ENCODE measurements at regions of chr17 and their contacts with region 1.

Region 1: GRCh38 chr17:37225458-37225857 is 150.3 kb upstream of the C17orf78 start:
- DNase-seq: no peak
- H3K4me3 Mint-ChIP-seq: no peak overlapping the region
- H3K27ac Mint-ChIP-seq: peak overlapping the region; percentile 3
- H3K4me1 Mint-ChIP-seq: no peaks in the 10 kb centered on the region
- H3K27me3 Mint-ChIP-seq: no peaks in the 10 kb centered on the region
- CTCF ChIP-seq: no peak

Region 2: GRCh38 chr17:37179893-37180292 is 45.6 kb before region 1 on chr17:
- CTCF ChIA-PET with region 1: no interaction called
- intact Hi-C with region 1: no loop called
- DNase-seq: no peak
- H3K4me3 Mint-ChIP-seq: no peak overlapping the region
- H3K27ac Mint-ChIP-seq: no peak overlapping the region
- H3K4me1 Mint-ChIP-seq: peaks cover 29% of the 10 kb centered on the region
- H3K27me3 Mint-ChIP-seq: no peaks in the 10 kb centered on the region
- CTCF ChIP-seq: no peak

Region 3: GRCh38 chr17:37239690-37240334 is 14.4 kb after region 1 on chr17:
- CTCF ChIA-PET with region 1: interaction called, 10 read pairs
- intact Hi-C with region 1: no loop called
- DNase-seq: no peak
- H3K4me3 Mint-ChIP-seq: no peak overlapping the region
- H3K27ac Mint-ChIP-seq: no peak overlapping the region
- H3K4me1 Mint-ChIP-seq: peaks cover 11% of the 10 kb centered on the region
- H3K27me3 Mint-ChIP-seq: no peaks in the 10 kb centered on the region
- CTCF ChIP-seq: peak; percentile 94